ENCODE measurements at regions of chr11 and their contacts with region 1.

Region 1: DNA sequence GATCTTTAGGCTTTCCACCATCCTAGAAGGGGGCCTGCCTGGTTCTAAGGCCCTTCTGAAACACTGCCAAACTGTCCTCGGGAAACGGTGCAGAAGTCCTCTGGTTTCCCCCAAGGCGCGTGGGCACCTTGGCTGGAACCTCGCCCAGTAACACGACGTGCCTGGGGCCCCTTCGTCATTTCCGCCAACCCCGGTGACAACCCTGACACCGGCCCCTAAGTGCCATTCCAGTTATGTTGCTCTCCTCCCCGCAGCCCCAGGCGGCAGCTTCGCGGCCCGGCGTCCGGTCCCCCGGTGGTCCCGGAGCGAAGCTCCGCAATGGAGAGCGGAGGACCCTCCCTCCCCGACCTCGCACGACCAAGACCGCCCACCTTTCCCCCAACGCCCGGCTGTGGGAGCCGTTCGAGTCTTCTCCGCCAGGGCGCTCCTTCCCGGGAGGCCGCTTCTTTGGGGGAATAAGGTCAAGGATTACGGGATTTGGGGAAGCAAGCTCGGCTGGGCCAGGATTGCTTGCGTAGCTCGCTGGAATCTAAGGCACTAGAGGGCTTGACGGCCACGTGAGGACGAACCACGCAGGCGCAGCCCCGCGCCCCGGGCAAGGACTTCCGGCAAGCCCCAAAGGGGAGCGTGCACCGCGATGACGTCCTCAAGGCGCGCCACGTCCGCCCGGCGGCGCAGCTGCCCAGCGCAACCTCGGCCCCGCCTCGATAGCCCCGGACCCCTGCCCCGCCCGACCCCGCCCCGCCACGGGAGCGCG is 626 bp downstream of the RNH1 start:
- DNase-seq: peak; percentile 98 to 99
- H3K4me3 ChIP-seq: peak overlapping the region; percentile 100
- H3K4me3 Mint-ChIP-seq: peak overlapping the region; percentile 96
- H3K27ac Mint-ChIP-seq: peak overlapping the region; percentile 100
- H3K4me1 ChIP-seq: peaks cover 7% of the 10 kb centered on the region
- H3K4me1 Mint-ChIP-seq: no peaks in the 10 kb centered on the region
- H3K27me3 ChIP-seq: no peaks in the 10 kb centered on the region
- H3K27me3 Mint-ChIP-seq: no peaks in the 10 kb centered on the region
- CTCF ChIP-seq: no peak

Region 2: DNA sequence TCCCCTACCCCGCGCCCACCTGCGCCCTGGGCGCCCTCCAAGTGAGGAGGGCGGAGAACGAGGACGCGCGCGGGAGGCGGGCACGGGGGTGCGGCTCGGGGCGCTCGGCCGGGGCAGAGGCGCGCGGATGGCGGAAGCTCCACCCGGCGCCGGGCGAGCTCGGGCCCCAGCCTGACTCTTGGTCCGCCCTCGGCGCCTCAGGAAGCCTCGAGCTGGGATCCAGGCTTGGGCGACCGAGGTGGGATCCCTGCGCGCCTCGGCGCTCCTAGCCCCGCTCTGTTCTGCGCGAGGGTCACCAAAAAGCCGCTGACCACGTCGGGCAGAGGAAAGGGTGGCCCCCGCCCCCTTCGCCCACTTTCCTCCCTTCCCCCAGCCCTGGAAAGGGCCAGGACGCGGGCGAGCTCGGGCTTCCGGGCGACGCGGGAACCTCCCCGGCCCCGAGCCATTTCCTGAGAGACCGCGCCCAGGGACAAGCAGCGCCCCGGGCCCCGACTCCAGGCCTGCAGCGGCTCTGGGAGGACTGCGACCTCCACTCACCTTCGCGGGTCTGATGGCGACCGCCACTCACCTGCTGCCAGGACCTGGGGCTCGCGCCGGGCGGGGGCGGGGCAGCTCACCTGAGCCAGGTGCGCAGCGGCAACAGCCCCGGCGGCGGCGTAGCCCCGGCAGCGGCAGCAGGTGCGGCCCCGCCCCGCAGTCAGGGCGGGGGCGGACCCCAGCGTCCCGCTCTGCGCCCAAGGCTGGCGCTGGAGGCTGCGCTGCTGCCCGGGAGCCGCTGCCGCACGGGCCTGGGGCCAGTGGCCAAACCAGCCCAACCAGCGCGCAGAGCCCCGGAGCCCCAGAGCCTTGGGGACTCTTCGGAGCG is 89.4 kb before region 1 on chr11:
- CTCF ChIA-PET with region 1: no interaction called
- POLR2A ChIA-PET with region 1: no interaction called
- intact Hi-C with region 1: loop called (anchors 1 kb)
- DNase-seq: peak; percentile 87 to 94
- H3K4me3 ChIP-seq: peak overlapping the region; percentile 96
- H3K4me3 Mint-ChIP-seq: peak overlapping the region; percentile 82
- H3K27ac Mint-ChIP-seq: peak overlapping the region; percentile 89
- H3K4me1 ChIP-seq: peaks cover 23% of the 10 kb centered on the region
- H3K4me1 Mint-ChIP-seq: peaks cover 11% of the 10 kb centered on the region
- H3K27me3 ChIP-seq: no peaks in the 10 kb centered on the region
- H3K27me3 Mint-ChIP-seq: no peaks in the 10 kb centered on the region
- CTCF ChIP-seq: no peak

Region 3: GRCh38 chr11:535519-536454 is 29.4 kb after region 1 on chr11 and contains the start of gene HRAS:
- CTCF ChIA-PET with region 1: no interaction called
- POLR2A ChIA-PET with region 1: interaction called, 3 read pairs
- intact Hi-C with region 1: loop called (anchors 2 kb)
- DNase-seq: peak; percentile 93 to 98
- H3K4me3 ChIP-seq: peak within 1 kb of the TSS; percentile 66
- H3K4me3 Mint-ChIP-seq: peak within 1 kb of the TSS; percentile 88
- H3K27ac Mint-ChIP-seq: peak within 1 kb of the TSS; percentile 88
- H3K4me1 ChIP-seq: peaks cover 9% of the 10 kb centered on the region; the same call in 1 of the 2 replicates
- H3K4me1 Mint-ChIP-seq: no peaks in the 10 kb centered on the region
- H3K27me3 ChIP-seq: no peaks in the 10 kb centered on the region
- H3K27me3 Mint-ChIP-seq: no peaks in the 10 kb centered on the region
- CTCF ChIP-seq: no peak
- total RNA-seq, gene HRAS: 60.2 and 69.0 TPM in 2 replicates